ENCODE measurements at regions of chr15 and their contacts with region 1.

Region 1: GRCh38 chr15:50686468-50687301 is at the start of gene TRPM7:
- DNase-seq: peak; percentile 91 to 98 (median 93)
- ATAC-seq: peak; percentile 93
- H3K4me3 ChIP-seq: peak within 1 kb of the TSS; percentile 75 to 85
- H3K27ac ChIP-seq: peak within 1 kb of the TSS; percentile 90 to 97
- H3K4me1 ChIP-seq: peaks cover 0 to 39% of the 10 kb centered on the region in 2 donors
- H3K27me3 ChIP-seq: no peaks in the 10 kb centered on the region
- CTCF ChIP-seq: no peak
- polyA plus RNA-seq, gene TRPM7: 32.6 to 44.7 (median 40.1) TPM

Region 2: DNA sequence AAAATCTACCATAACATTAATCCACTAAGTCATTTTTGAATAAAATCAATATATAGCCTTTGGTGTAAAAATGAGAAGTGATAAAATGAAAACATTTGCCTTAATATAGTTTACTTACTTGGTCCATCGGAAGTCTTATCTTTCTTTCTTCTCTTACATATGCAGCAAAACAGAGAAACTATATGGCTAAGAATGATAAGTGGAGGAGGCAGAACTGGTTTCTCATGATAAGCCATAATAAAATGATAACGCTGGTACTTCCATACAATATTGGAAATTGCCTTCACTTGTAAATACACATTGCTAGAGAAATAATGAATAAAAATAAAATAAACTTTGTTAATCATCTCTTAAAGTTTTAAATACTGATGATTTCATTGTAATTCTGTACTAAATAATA is 92.4 kb before region 1 on chr15:
- intact Hi-C with region 1: no loop called
- DNase-seq: no peak
- ATAC-seq: no peak
- H3K4me3 ChIP-seq: no peak overlapping the region
- H3K27ac ChIP-seq: no peak overlapping the region
- H3K4me1 ChIP-seq: no peaks in the 10 kb centered on the region
- H3K27me3 ChIP-seq: no peaks in the 10 kb centered on the region
- CTCF ChIP-seq: no peak

Region 3: DNA sequence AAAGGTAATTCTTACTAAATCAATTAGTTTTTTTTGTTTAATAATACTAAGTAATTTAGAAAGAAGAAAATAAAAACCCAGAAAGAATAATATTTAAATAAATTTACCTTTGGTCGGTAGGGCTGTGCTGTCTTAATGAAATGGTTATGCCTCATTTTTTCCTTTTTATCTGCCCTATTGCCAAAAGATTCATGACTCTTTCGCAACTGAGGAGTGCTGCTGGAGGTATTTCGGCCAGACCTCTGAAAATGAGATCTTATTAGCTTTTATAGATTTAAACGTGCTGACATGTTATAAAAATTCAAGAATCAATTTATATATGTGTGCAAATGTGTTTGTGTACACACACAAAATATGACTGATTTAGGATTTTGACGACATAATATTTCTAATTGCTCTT is 73.1 kb before region 1 on chr15:
- intact Hi-C with region 1: no loop called
- DNase-seq: no peak
- ATAC-seq: no peak
- H3K4me3 ChIP-seq: no peak overlapping the region
- H3K27ac ChIP-seq: no peak overlapping the region
- H3K4me1 ChIP-seq: no peaks in the 10 kb centered on the region
- H3K27me3 ChIP-seq: no peaks in the 10 kb centered on the region
- CTCF ChIP-seq: no peak

Region 4: DNA sequence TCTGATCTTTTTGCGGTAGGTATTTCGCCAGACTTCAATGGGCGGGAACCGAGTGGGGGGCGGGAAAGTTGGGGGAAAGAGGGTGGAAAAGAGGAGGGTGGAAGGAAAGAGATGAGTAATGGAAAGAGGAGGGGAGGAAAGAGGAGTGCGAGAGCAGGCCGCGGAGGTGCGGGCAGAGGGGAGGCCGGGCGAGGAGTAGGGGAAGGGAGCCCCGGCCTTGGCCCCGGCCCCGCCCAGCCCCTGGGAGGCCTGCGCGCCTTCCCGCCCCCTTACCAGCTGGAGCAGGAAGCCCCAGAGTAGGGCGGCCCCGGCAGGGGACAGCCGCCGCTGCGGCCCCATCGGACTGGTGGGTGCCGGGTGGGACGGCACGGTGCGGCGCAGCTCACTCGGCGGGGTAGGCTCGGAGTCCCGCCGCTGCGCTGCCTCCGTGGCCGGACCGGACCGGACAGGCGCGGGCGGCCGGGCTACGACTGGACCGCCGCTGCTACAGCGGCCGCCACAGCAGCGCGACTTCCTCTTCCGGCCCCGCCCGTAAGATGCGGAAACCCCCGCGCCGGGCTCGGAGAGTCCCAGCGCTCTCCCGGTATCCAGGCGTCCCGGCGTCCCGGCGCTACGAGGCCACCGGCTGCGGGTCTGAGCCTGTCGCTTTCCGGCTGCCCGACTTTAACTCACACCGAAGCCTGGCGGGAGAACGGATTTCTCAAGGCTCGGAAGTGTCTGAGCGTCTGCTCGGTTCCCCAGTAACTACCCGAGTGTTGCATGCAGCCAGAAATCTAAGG is 78.7 kb after region 1 on chr15 and contains the start of gene SPPL2A:
- intact Hi-C with region 1: loop called in 1 of 2 experiments (anchors 10 kb)
- DNase-seq: peak; percentile 77 to 97 (median 87)
- ATAC-seq: peak; percentile 95
- H3K4me3 ChIP-seq: peak within 1 kb of the TSS; percentile 74
- H3K27ac ChIP-seq: peak within 1 kb of the TSS; percentile 98 to 99
- H3K4me1 ChIP-seq: peaks cover 0 to 35% of the 10 kb centered on the region in 2 donors
- H3K27me3 ChIP-seq: no peaks in the 10 kb centered on the region
- CTCF ChIP-seq: no peak
- polyA plus RNA-seq, gene SPPL2A: 70.9 to 84.3 (median 82.6) TPM

Measured in left lung (tissue), 14 donors.